ENCODE measurements at regions of chr14 and their contacts with region 1.

Region 1: DNA sequence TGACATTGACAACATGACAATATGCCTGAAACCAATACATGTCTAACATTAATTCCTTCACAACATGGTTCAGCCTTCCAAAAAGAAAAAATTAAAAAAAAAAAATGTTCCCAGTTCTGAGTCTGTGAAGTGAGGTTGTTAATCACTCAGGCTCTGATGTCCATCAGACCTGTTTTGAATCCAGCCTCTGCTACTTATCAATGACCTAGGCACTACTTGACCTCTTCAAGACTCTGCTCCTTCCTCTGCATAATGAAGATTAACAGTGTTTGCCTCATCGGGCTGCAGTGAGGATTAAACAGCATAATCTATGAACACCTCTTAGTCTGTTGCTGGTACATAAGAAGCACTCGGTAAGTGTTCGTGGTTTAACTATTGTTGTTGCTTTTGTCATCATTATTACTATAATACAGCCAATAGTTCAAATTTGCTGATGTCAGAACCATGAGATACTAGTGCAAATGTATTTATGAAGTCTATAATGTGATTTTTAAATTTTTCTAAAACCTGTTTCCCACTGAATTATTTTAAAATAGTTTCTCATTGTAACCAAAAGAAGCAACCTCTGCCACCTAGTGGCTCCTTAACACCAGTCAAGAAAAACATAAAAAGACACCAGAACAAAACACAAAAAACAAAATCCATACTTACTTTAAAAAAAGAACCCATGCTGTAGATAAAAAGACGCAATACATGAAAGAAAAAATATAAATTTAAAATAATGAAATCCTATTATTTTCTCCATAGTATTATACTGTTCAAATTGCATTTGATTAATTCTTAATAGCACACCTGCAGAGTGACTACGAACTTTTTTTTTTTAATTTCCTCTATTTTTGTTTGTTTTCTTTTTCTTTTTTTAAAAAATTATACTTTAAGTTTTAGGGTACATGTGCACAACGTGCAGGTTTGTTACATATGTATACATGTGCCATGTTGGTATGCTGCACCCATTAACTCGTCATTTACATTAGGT is 20.3 kb upstream of the TMX1 start:
- DNase-seq: peak; percentile 49
- H3K4me3 ChIP-seq: no peak overlapping the region
- H3K27ac ChIP-seq: no peak overlapping the region
- H3K4me1 ChIP-seq: no peaks in the 10 kb centered on the region
- H3K27me3 ChIP-seq: no peaks in the 10 kb centered on the region
- CTCF ChIP-seq: peak; percentile 79

Region 2: GRCh38 chr14:50954811-50955372 is 264.9 kb before region 1 on chr14:
- CTCF ChIA-PET with region 1: interaction called, 5 read pairs
- POLR2A ChIA-PET with region 1: no interaction called
- intact Hi-C with region 1: loop called (anchors 5 kb)
- DNase-seq: peak; percentile 87
- H3K4me3 ChIP-seq: no peak overlapping the region
- H3K27ac ChIP-seq: peak overlapping the region; percentile 78
- H3K4me1 ChIP-seq: peaks cover 17% of the 10 kb centered on the region
- H3K27me3 ChIP-seq: no peaks in the 10 kb centered on the region
- CTCF ChIP-seq: peak; percentile 83

Region 3: GRCh38 chr14:51094901-51095853 is 124.6 kb before region 1 on chr14 and contains the start of gene TRIM9:
- CTCF ChIA-PET with region 1: interaction called, 9 read pairs
- POLR2A ChIA-PET with region 1: no interaction called
- intact Hi-C with region 1: loop called (anchors 5 kb)
- DNase-seq: peak; percentile 99
- H3K4me3 ChIP-seq: peak within 1 kb of the TSS; percentile 69
- H3K27ac ChIP-seq: peak within 1 kb of the TSS; percentile 73
- H3K4me1 ChIP-seq: peaks cover 14% of the 10 kb centered on the region
- H3K27me3 ChIP-seq: no peaks in the 10 kb centered on the region
- CTCF ChIP-seq: no peak
- total RNA-seq, gene TRIM9: 6.8 and 9.8 TPM in 2 replicates

Region 4: DNA sequence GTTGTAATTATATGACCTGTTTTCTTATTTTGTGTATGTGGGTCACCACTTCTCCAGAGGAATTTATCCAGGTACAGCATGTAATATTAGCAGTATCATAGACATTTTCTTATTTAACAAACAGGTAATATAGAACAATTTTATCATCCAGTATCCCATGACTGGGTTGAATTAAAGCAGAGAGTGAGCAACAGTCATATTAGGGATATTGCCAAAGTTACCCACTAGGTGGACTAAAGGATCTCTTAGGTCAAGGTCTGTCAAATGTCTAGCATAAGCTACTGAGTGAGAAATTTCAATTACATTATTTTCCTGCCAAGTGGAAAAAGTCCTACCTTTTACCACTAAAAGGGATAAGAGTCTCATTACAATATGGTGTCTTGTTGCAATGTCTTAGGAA is 62.7 kb before region 1 on chr14:
- CTCF ChIA-PET with region 1: no interaction called
- POLR2A ChIA-PET with region 1: no interaction called
- intact Hi-C with region 1: loop called (anchors 5 kb)
- DNase-seq: peak; percentile 47
- H3K4me3 ChIP-seq: no peak overlapping the region
- H3K27ac ChIP-seq: no peak overlapping the region
- H3K4me1 ChIP-seq: no peaks in the 10 kb centered on the region
- H3K27me3 ChIP-seq: no peaks in the 10 kb centered on the region
- CTCF ChIP-seq: peak; percentile 42; the same call in 1 of the 2 replicates

Measured in A673 (cell line).